ENCODE measurements at regions of chr16 and their contacts with region 1.

Region 1: GRCh38 chr16:27401768-27402568 is at the start of gene IL21R:
- DNase-seq: peak; percentile 93
- H3K4me3 Mint-ChIP-seq: peak within 1 kb of the TSS; percentile 98
- H3K27ac Mint-ChIP-seq: peak within 1 kb of the TSS; percentile 100
- H3K4me1 Mint-ChIP-seq: peaks cover 43% of the 10 kb centered on the region
- H3K27me3 Mint-ChIP-seq: no peaks in the 10 kb centered on the region
- total RNA-seq, gene IL21R: 93.8 to 99.2 TPM

Region 2: GRCh38 chr16:27374804-27375425 is 27.1 kb before region 1 on chr16:
- CTCF ChIA-PET with region 1: interaction called, 12 read pairs
- intact Hi-C with region 1: loop called (anchors 1 kb)
- DNase-seq: peak; percentile 81
- H3K4me3 Mint-ChIP-seq: no peak overlapping the region
- H3K27ac Mint-ChIP-seq: no peak overlapping the region
- H3K4me1 Mint-ChIP-seq: peaks cover 47% of the 10 kb centered on the region
- H3K27me3 Mint-ChIP-seq: no peaks in the 10 kb centered on the region

Region 3: DNA sequence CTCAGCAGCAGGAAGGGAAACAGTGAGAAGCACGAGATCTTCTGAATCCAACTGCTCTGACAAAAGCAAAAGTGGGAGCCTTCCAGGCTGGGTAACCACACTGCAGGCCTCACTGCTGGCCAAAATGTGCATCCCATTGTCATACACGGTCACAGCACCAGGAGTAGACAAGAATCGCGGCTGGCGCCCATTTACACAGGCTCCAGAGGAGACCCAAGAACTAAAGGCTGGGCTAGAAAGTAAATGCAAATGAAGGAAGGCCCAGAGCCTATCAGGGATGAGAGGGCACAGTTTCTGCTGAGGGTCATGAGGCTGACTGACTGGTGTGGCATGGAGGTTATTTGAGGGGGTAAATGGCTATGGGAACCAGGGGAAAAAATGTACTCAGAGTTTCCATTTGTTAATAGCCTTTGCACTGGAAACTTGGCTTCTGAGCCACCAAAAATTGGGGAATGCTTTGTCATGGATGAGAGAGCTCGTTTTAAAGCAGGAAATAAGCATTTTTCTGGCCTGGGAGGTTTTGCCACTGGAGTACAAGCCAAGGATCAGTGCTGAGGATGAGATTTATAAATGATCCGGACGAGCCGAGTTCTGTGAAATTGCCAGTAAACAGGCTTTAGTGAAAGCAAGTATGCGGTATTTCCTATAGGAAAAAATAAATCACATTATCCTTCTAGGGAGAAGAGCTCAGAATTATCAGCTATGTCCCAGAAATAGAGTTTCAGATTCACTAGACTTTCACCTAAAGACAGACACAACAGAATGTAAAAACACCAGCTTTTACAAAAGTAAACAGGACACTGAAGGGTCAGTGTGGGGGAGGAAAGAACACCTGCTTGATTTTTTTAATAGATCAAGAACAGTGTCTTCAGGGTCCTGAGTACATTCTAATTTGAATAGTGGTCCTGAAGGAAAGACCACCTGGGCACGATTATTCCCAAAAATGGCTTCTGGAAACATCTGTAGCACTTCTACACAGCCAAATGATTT is 728.4 kb after region 1 on chr16:
- CTCF ChIA-PET with region 1: no interaction called
- intact Hi-C with region 1: no loop called
- DNase-seq: no peak
- H3K4me3 Mint-ChIP-seq: no peak overlapping the region
- H3K27ac Mint-ChIP-seq: peak overlapping the region; percentile 67
- H3K4me1 Mint-ChIP-seq: peaks cover 16% of the 10 kb centered on the region
- H3K27me3 Mint-ChIP-seq: no peaks in the 10 kb centered on the region

Region 4: GRCh38 chr16:28181515-28181914 is 779.5 kb after region 1 on chr16:
- CTCF ChIA-PET with region 1: no interaction called
- intact Hi-C with region 1: loop called (anchors 10 kb)
- DNase-seq: no peak
- H3K4me3 Mint-ChIP-seq: no peak overlapping the region
- H3K27ac Mint-ChIP-seq: peak overlapping the region; percentile 91
- H3K4me1 Mint-ChIP-seq: peaks cover 80% of the 10 kb centered on the region
- H3K27me3 Mint-ChIP-seq: no peaks in the 10 kb centered on the region